Naive thymus-derived CD8-positive, alpha-beta T cell (primary cell): ENCODE measurements at regions of chr7 and their contacts with region 1.

Region 1: DNA sequence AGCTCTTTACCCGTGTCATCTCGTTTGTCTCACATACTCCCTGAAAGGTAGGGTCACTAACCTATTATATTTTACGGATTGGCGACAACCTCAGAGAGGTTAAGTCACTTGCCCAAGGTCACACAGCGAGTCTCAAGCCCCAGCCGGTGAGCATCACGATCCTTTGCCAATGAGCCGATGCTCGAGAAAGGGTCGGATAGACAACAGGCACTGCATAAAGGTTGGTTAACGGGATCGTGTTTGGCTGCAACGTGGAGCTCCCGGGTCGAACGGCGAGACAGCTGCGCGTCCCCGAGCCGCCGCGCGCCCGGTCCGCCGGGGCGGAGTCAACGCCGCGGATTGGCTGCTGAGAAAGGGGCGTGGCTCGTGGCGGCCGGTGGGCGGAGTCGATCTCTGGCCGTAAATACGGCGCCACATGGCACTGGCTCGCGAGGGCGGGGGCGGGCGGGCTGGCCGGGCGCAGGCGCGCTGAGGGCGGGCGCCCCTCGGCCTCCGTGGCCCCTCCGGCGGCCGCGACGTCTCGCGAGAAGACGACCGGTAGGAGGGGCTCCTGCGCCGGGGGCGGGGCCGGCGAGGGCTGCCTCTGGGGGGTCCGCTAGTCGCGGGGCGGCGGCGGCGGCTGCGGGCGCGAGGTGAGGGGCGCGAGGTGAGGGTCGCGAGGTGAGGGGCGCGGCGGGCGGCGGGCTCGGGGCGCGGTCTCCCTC is at the start of gene CHST12:
- DNase-seq: peak; percentile 93 to 96 (median 94)
- ATAC-seq: peak; percentile 74 to 76
- H3K4me3 Mint-ChIP-seq: peak within 1 kb of the TSS; percentile 82 to 95 (median 90)
- H3K27ac Mint-ChIP-seq: peak within 1 kb of the TSS; percentile 82 to 98 (median 88)
- H3K4me1 Mint-ChIP-seq: peaks cover 39 to 59% (median 50%) of the 10 kb centered on the region in 4 donors
- H3K27me3 Mint-ChIP-seq: no peaks in the 10 kb centered on the region
- polyA plus RNA-seq, gene CHST12: 8.9 to 21.7 (median 16.5) TPM

Region 2: GRCh38 chr7:2299131-2299829 is 103.9 kb before region 1 on chr7:
- POLR2A ChIA-PET with region 1: no interaction called
- DNase-seq: no peak
- ATAC-seq: no peak
- H3K4me3 Mint-ChIP-seq: peak overlapping the region in 1 of 10 donors; percentile 64
- H3K27ac Mint-ChIP-seq: peak overlapping the region in 2 of 10 donors; percentile 46 to 82
- H3K4me1 Mint-ChIP-seq: peaks cover 0 to 43% (median 2%) of the 10 kb centered on the region in 4 donors
- H3K27me3 Mint-ChIP-seq: no peaks in the 10 kb centered on the region

Region 3: GRCh38 chr7:2354186-2354938 is 48.8 kb before region 1 on chr7 and contains the start of gene EIF3B:
- POLR2A ChIA-PET with region 1: interaction called, 11 read pairs
- DNase-seq: peak; percentile 79 to 100 (median 89)
- ATAC-seq: peak; percentile 89 to 90
- H3K4me3 Mint-ChIP-seq: peak within 1 kb of the TSS; percentile 88 to 99 (median 94)
- H3K27ac Mint-ChIP-seq: peak within 1 kb of the TSS; percentile 99 to 100 (median 100)
- H3K4me1 Mint-ChIP-seq: peaks cover 9 to 51% (median 37%) of the 10 kb centered on the region in 4 donors
- H3K27me3 Mint-ChIP-seq: no peaks in the 10 kb centered on the region
- polyA plus RNA-seq, gene EIF3B: 96.5 to 164 (median 114) TPM

Region 4: DNA sequence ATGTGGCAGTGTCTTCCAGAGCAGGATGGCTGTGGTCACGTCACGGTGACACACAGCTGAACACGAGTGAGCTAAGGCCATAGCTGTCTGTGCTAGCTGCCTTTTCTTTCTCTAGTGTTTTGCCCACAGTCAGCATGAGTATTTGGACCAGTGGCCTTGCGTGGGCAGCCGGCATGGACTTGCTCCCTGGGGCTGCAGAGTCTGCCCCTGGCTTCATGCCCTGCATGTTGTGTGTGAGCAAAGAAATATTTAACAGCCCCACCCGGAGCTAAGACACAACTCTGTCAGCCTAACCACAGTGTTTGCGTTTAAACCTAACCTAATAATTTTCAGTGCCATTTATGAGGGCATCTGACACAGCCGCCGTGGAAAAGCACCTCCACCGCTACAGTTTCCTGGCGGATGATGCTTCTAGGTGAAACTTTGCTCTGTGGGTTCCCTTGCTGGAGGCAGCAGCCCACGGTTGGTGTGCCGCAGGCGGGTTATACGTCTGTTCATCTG is 14.9 kb after region 1 on chr7:
- POLR2A ChIA-PET with region 1: interaction called, 10 read pairs
- DNase-seq: peak in 6 of 10 donors; percentile 27 to 61 (median 40)
- ATAC-seq: peak; percentile 60 to 95
- H3K4me3 Mint-ChIP-seq: peak overlapping the region in 7 of 10 donors; percentile 25 to 66 (median 57)
- H3K27ac Mint-ChIP-seq: peak overlapping the region in 6 of 10 donors; percentile 12 to 90 (median 78)
- H3K4me1 Mint-ChIP-seq: peaks cover 18 to 62% (median 35%) of the 10 kb centered on the region in 4 donors
- H3K27me3 Mint-ChIP-seq: no peaks in the 10 kb centered on the region